Heart right ventricle (tissue), 16 donors: ENCODE measurements at regions of chr3 and their contacts with region 1.

Region 1: GRCh38 chr3:117184574-117184973 is 475.0 kb downstream of the TUSC7 start:
- DNase-seq: no peak
- ATAC-seq: no peak
- H3K4me3 ChIP-seq: no peak overlapping the region
- H3K27ac ChIP-seq: no peak overlapping the region
- H3K4me1 ChIP-seq: no peaks in the 10 kb centered on the region
- H3K27me3 ChIP-seq: no peaks in the 10 kb centered on the region
- CTCF ChIP-seq: no peak

Region 2: GRCh38 chr3:117118604-117119003 is 66.0 kb before region 1 on chr3:
- intact Hi-C with region 1: no loop called
- DNase-seq: no peak
- ATAC-seq: no peak
- H3K4me3 ChIP-seq: no peak overlapping the region
- H3K27ac ChIP-seq: no peak overlapping the region
- H3K4me1 ChIP-seq: no peaks in the 10 kb centered on the region
- H3K27me3 ChIP-seq: no peaks in the 10 kb centered on the region
- CTCF ChIP-seq: no peak

Region 3: DNA sequence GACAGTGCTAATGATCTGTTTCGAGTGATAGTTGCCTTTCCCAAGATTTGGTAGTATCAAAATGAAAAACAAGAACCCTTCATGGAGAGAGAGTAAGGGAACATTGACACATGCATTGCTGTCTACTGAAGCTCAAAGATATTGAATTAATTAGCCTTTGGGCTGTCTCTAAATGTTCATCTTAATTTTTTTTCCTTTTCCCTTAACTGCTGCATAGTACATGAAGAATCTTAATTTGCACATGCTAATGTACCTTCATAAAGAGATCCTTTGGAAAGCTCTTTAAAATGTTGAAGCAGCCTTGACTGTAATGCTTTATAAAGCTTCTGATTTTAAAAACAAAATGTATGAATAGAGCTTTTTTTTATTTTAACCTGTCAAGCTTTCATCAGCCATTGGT is 22.8 kb before region 1 on chr3:
- intact Hi-C with region 1: loop called in 1 of 10 experiments (anchors 2 kb)
- DNase-seq: no peak
- ATAC-seq: no peak
- H3K4me3 ChIP-seq: no peak overlapping the region
- H3K27ac ChIP-seq: no peak overlapping the region
- H3K4me1 ChIP-seq: no peaks in the 10 kb centered on the region
- H3K27me3 ChIP-seq: no peaks in the 10 kb centered on the region
- CTCF ChIP-seq: no peak

Region 4: GRCh38 chr3:117266806-117267205 is 82.2 kb after region 1 on chr3:
- intact Hi-C with region 1: no loop called
- DNase-seq: no peak
- ATAC-seq: no peak
- H3K4me3 ChIP-seq: no peak overlapping the region
- H3K27ac ChIP-seq: no peak overlapping the region
- H3K4me1 ChIP-seq: no peaks in the 10 kb centered on the region
- H3K27me3 ChIP-seq: peaks cover 0 to 10% (median 0%) of the 10 kb centered on the region in 7 donors
- CTCF ChIP-seq: no peak